Sigmoid colon (tissue), 7 donors: ENCODE measurements at regions of chr11 and their contacts with region 1.

Region 1: DNA sequence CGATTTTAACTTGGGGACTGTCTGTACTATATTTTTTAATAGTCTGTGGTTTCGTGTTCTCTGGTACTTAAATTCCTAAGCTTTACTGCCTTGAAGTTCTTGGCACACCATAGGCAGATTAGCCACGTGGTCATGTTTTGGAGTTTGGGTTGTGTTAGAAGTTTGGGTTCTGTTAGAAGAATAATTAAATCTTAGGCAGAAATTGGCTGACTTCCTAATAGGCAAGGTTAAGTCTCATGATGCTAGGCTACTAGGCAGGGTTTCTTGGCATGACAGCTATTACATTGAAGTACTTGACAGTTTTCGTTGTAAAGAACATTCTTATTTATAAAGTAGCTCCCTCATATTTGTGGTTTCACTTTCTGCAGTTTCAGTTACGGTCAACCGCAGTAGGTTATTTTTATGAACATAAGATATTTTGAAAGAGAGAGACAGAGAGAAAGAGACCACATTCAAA is 30.0 kb upstream of the MMP7 start:
- DNase-seq: peak; percentile 76
- H3K4me3 ChIP-seq: peak overlapping the region; percentile 25 to 43 (median 38)
- H3K27ac ChIP-seq: peak overlapping the region; percentile 31 to 79 (median 74)
- H3K4me1 ChIP-seq: peaks cover 0 to 28% (median 26%) of the 10 kb centered on the region in 4 donors
- H3K27me3 ChIP-seq: no peaks in the 10 kb centered on the region
- CTCF ChIP-seq: no peak
- EP300 ChIP-seq: peak in 3 of 4 donors; percentile 3 to 55 (median 48)
- POLR2A ChIP-seq: no peak

Region 2: DNA sequence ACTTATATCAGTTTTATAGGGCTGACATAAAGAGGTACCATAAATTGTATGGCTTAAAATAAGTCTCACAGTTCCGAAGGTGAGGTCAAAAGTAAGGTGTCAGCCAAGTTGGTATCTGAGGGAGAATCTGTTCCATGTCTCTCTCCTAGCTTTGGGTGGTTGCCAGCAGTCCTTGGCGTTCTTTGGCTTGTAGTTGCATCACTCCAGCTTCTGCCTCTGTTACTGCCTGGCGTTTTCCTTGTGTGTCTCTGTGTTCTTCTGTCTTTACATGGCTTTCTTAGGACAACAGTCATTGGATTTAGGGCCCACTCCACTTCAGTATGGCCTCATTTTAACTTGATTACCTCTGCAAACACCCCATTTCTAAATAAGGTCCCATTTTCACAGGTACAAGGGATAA is 46.7 kb before region 1 on chr11:
- intact Hi-C with region 1: loop called (anchors 5 kb)
- DNase-seq: peak; percentile 96
- H3K4me3 ChIP-seq: no peak overlapping the region
- H3K27ac ChIP-seq: peak overlapping the region in 3 of 4 donors; percentile 55 to 73 (median 72)
- H3K4me1 ChIP-seq: peaks cover 0 to 43% (median 15%) of the 10 kb centered on the region in 4 donors
- H3K27me3 ChIP-seq: no peaks in the 10 kb centered on the region
- CTCF ChIP-seq: no peak
- EP300 ChIP-seq: peak in 1 of 4 donors; percentile 51
- POLR2A ChIP-seq: no peak

Region 3: GRCh38 chr11:102685754-102686153 is 125.2 kb after region 1 on chr11:
- intact Hi-C with region 1: no loop called
- DNase-seq: no peak
- H3K4me3 ChIP-seq: no peak overlapping the region
- H3K27ac ChIP-seq: no peak overlapping the region
- H3K4me1 ChIP-seq: peaks cover 0 to 5% (median 0%) of the 10 kb centered on the region in 4 donors
- H3K27me3 ChIP-seq: no peaks in the 10 kb centered on the region
- CTCF ChIP-seq: no peak
- EP300 ChIP-seq: no peak
- POLR2A ChIP-seq: no peak